CD8-positive, alpha-beta memory T cell (primary cell): ENCODE measurements at regions of chr9 and their contacts with region 1.

Region 1: GRCh38 chr9:133683586-133684120 is 47.5 kb downstream of the DBH start:
- DNase-seq: peak; percentile 61 to 93 (median 75)
- H3K4me3 ChIP-seq: peak overlapping the region; percentile 50
- H3K4me3 Mint-ChIP-seq: peak overlapping the region; percentile 19 to 82 (median 73)
- H3K27ac ChIP-seq: peak overlapping the region; percentile 94
- H3K27ac Mint-ChIP-seq: peak overlapping the region; percentile 97 to 100 (median 98)
- H3K4me1 ChIP-seq: peaks cover 40% of the 10 kb centered on the region
- H3K4me1 Mint-ChIP-seq: peaks cover 16 to 40% (median 21%) of the 10 kb centered on the region in 3 donors
- H3K27me3 ChIP-seq: no peaks in the 10 kb centered on the region
- H3K27me3 Mint-ChIP-seq: peaks cover 0 to 1% of the 10 kb centered on the region in 2 donors

Region 2: GRCh38 chr9:133701862-133702797 is 18.5 kb after region 1 on chr9:
- CTCF ChIA-PET with region 1: interaction called, 27 read pairs
- POLR2A ChIA-PET with region 1: interaction called, 23 read pairs
- DNase-seq: peak in 4 of 5 donors; percentile 13 to 79 (median 62)
- H3K4me3 ChIP-seq: peak overlapping the region; percentile 64
- H3K4me3 Mint-ChIP-seq: peak overlapping the region; percentile 71 to 86 (median 80)
- H3K27ac ChIP-seq: no peak overlapping the region
- H3K27ac Mint-ChIP-seq: peak overlapping the region; percentile 84 to 97 (median 91)
- H3K4me1 ChIP-seq: peaks cover 54% of the 10 kb centered on the region
- H3K4me1 Mint-ChIP-seq: peaks cover 25 to 48% (median 37%) of the 10 kb centered on the region in 3 donors
- H3K27me3 ChIP-seq: no peaks in the 10 kb centered on the region
- H3K27me3 Mint-ChIP-seq: no peaks in the 10 kb centered on the region